Endothelial cell of umbilical vein (primary cell): ENCODE measurements at regions of chr3 and their contacts with region 1.

Region 1: GRCh38 chr3:13770170-13771169 is 109.4 kb downstream of the WNT7A start:
- DNase-seq: no peak
- H3K4me3 ChIP-seq: no peak overlapping the region
- H3K27ac ChIP-seq: no peak overlapping the region
- H3K4me1 ChIP-seq: no peaks in the 10 kb centered on the region
- H3K27me3 ChIP-seq: no peaks in the 10 kb centered on the region
- CTCF ChIP-seq: no peak
- POLR2A ChIP-seq: no peak

Region 2: DNA sequence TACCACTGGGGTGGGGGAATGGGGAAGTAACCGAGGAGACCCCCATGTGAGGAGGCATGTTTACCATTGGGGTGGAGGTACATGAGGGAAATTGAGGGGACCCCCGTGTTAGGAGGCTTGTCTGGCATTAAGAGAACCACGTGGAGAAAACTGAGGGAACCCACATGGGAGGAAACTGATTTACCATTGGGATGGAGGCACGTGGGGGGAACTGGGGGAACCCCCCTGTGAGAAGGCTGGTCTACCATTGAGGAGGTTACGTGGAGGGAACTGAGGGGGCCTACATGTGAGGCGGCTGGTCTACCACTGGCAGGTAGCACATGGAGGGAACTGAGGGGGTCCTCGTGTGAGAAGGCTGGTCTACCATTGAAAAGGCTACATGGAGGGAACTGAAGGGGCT is 62.2 kb before region 1 on chr3:
- CTCF ChIA-PET with region 1: no interaction called
- POLR2A ChIA-PET with region 1: no interaction called
- dilution Hi-C with region 1: no loop called
- intact Hi-C with region 1: loop called (anchors 2 kb)
- DNase-seq: no peak
- H3K4me3 ChIP-seq: no peak overlapping the region
- H3K27ac ChIP-seq: no peak overlapping the region
- H3K4me1 ChIP-seq: no peaks in the 10 kb centered on the region
- H3K27me3 ChIP-seq: no peaks in the 10 kb centered on the region
- CTCF ChIP-seq: no peak
- POLR2A ChIP-seq: no peak